Mammary epithelial cell (primary cell): ENCODE measurements at regions of chr5 and their contacts with region 1.

Region 1: GRCh38 chr5:176929654-176930053 is 30.5 kb upstream of the HK3 start:
- DNase-seq: no peak
- H3K4me3 ChIP-seq: no peak overlapping the region
- H3K27ac ChIP-seq: no peak overlapping the region
- H3K4me1 ChIP-seq: peaks cover 2% of the 10 kb centered on the region
- H3K27me3 ChIP-seq: no peaks in the 10 kb centered on the region
- CTCF ChIP-seq: no peak

Region 2: DNA sequence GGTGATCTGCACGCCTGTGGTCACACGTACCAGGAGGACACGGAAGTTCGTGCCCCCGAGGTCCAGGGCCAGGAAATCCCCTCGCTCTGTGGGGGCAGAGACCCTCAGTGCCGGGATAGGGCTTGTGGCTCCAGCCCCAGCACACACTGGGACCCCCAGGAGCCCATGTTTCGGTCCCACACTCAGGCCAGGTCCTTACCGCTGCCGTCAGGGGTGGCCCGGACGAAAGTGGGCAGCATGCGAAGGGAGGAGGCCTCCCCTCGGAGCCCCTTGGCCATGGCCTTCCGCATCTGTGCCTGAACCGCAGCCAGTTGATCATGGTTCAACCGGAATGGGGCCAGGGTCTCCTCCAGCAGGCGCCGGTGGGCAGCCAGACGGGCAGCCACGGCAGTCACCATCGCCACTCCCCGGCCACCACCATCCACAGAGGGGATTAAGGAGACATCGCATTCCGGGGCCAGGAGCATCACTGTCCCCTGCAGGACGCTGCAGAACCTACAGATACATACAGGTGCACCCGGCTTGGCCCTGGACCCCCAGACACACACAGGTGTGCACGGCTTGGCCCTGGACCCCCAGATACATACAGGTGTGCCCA is 42.3 kb before region 1 on chr5:
- CTCF ChIA-PET with region 1: no interaction called
- dilution Hi-C with region 1: loop called (anchors 5 kb)
- in situ Hi-C with region 1: no loop called
- intact Hi-C with region 1: no loop called
- DNase-seq: no peak
- H3K4me3 ChIP-seq: no peak overlapping the region
- H3K27ac ChIP-seq: no peak overlapping the region
- H3K4me1 ChIP-seq: no peaks in the 10 kb centered on the region
- H3K27me3 ChIP-seq: no peaks in the 10 kb centered on the region
- CTCF ChIP-seq: no peak